ENCODE measurements at regions of chr5 and their contacts with region 1.

Region 1: DNA sequence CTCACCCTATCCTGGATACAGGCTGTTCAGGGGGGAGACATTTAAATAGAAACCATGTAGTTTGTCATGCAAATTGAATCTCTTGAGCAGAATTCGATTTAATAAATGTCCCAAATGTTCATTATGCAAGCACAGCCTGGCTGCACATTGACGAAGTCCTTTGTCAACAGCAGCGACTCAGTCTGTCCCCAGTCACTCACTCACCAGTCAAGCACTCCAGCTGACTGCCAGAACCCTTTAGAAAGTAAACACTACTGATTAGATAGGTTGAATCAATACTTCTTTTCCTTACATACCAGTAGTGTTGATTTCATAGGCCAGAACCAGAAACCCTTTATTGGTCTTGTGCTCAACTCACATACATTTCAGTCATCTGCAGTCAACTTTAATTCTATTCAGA is 27.5 kb downstream of the CDH6 start:
- DNase-seq: peak; percentile 70 to 81
- H3K4me3 ChIP-seq: no peak overlapping the region
- H3K4me3 Mint-ChIP-seq: peak overlapping the region; percentile 36
- H3K27ac Mint-ChIP-seq: peak overlapping the region; percentile 80
- H3K4me1 ChIP-seq: peaks cover 65% of the 10 kb centered on the region
- H3K4me1 Mint-ChIP-seq: peaks cover 37% of the 10 kb centered on the region
- H3K27me3 ChIP-seq: no peaks in the 10 kb centered on the region
- H3K27me3 Mint-ChIP-seq: no peaks in the 10 kb centered on the region
- CTCF ChIP-seq: no peak

Region 2: DNA sequence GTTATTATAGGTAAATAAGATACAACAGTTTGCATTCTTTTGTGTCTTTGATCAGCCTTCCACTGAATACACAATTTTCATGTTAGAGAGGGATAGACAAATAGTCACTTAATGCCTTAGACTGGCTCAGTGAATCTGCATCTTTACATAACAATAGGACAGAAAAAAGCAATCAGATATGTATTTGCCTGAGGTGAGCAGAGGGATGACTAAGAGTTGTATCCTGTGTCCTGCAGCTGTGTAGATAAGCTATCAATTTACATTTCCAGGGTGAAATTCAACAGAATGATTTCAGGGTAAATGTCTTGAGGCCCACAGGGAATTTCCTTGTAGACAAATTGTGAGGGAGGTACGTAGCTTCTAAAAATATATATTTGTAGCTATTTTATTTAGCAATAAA is 613.7 kb before region 1 on chr5:
- CTCF ChIA-PET with region 1: no interaction called
- POLR2A ChIA-PET with region 1: no interaction called
- intact Hi-C with region 1: loop called (anchors 5 kb)
- DNase-seq: no peak
- H3K4me3 ChIP-seq: no peak overlapping the region
- H3K4me3 Mint-ChIP-seq: no peak overlapping the region
- H3K27ac Mint-ChIP-seq: no peak overlapping the region
- H3K4me1 ChIP-seq: peaks cover 31% of the 10 kb centered on the region
- H3K4me1 Mint-ChIP-seq: no peaks in the 10 kb centered on the region
- H3K27me3 ChIP-seq: no peaks in the 10 kb centered on the region
- H3K27me3 Mint-ChIP-seq: no peaks in the 10 kb centered on the region
- CTCF ChIP-seq: no peak

Region 3: GRCh38 chr5:31027721-31028120 is 193.3 kb before region 1 on chr5:
- CTCF ChIA-PET with region 1: no interaction called
- POLR2A ChIA-PET with region 1: no interaction called
- intact Hi-C with region 1: loop called (anchors 1 kb)
- DNase-seq: peak in 1 of 2 experiments; percentile 42
- H3K4me3 ChIP-seq: no peak overlapping the region
- H3K4me3 Mint-ChIP-seq: peak overlapping the region; percentile 39
- H3K27ac Mint-ChIP-seq: peak overlapping the region; percentile 69
- H3K4me1 ChIP-seq: peaks cover 37% of the 10 kb centered on the region
- H3K4me1 Mint-ChIP-seq: peaks cover 28% of the 10 kb centered on the region
- H3K27me3 ChIP-seq: no peaks in the 10 kb centered on the region
- H3K27me3 Mint-ChIP-seq: no peaks in the 10 kb centered on the region
- CTCF ChIP-seq: no peak

Region 4: DNA sequence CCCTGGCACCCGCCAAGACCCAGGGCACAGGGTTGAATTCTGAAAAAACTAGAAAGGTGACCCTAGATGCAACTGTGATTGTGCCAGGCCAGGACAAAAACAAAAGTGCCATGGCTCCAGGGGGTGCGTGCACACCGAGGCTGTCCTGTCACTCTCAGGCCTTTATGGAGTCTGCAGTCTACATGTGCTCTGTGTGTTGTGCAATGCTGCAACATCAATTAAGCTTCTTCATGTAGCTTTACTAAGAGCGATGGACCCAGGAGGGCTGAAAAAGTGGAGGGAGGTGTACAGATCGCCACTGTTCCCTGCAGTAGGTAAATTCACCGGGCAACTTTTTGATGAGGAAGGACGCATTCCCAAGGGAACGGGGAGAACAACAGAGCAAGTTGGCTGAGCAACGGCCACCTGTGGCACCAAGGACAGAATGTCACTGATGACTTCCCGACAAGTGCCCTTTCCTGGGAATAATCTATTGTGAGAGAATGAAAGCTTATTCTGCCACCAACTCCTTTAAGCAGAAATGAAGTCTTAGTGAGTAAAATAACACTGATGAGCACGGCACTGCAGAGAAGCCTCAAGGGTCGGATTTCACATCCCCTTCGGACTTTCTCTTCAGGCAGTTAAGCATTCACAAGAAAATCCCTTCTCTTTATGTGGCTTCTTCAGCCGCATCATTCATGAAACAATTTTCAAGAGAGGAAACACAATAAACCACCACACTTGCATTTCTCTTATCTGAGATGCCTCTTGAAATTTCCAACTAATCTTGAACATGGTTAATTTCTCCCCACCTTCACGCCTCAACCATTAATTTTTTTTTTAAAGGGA is 161.3 kb after region 1 on chr5:
- CTCF ChIA-PET with region 1: no interaction called
- POLR2A ChIA-PET with region 1: no interaction called
- intact Hi-C with region 1: no loop called
- DNase-seq: no peak
- H3K4me3 ChIP-seq: no peak overlapping the region
- H3K4me3 Mint-ChIP-seq: no peak overlapping the region
- H3K27ac Mint-ChIP-seq: no peak overlapping the region
- H3K4me1 ChIP-seq: no peaks in the 10 kb centered on the region
- H3K4me1 Mint-ChIP-seq: no peaks in the 10 kb centered on the region
- H3K27me3 ChIP-seq: no peaks in the 10 kb centered on the region
- H3K27me3 Mint-ChIP-seq: peaks cover 9% of the 10 kb centered on the region
- CTCF ChIP-seq: no peak

Region 5: GRCh38 chr5:31463351-31463750 is 242.3 kb after region 1 on chr5:
- CTCF ChIA-PET with region 1: no interaction called
- POLR2A ChIA-PET with region 1: no interaction called
- intact Hi-C with region 1: no loop called
- DNase-seq: no peak
- H3K4me3 ChIP-seq: no peak overlapping the region
- H3K4me3 Mint-ChIP-seq: no peak overlapping the region
- H3K27ac Mint-ChIP-seq: no peak overlapping the region
- H3K4me1 ChIP-seq: no peaks in the 10 kb centered on the region
- H3K4me1 Mint-ChIP-seq: no peaks in the 10 kb centered on the region
- H3K27me3 ChIP-seq: no peaks in the 10 kb centered on the region
- H3K27me3 Mint-ChIP-seq: no peaks in the 10 kb centered on the region
- CTCF ChIP-seq: no peak

Measured in Caco-2 (cell line).